Esophagus muscularis mucosa (tissue), 4 donors: ENCODE measurements at regions of chr2 and their contacts with region 1.

Region 1: GRCh38 chr2:239157771-239158170 is 243.0 kb downstream of the HDAC4 start:
- DNase-seq: no peak
- H3K4me3 ChIP-seq: no peak overlapping the region
- H3K27ac ChIP-seq: no peak overlapping the region
- H3K4me1 ChIP-seq: peaks cover 0 to 24% (median 20%) of the 10 kb centered on the region in 4 donors
- H3K27me3 ChIP-seq: no peaks in the 10 kb centered on the region
- CTCF ChIP-seq: no peak
- EP300 ChIP-seq: no peak
- POLR2A ChIP-seq: no peak

Region 2: GRCh38 chr2:239193925-239194677 is 36.3 kb after region 1 on chr2:
- intact Hi-C with region 1: loop called (anchors 5 kb)
- DNase-seq: no peak
- H3K4me3 ChIP-seq: no peak overlapping the region
- H3K27ac ChIP-seq: peak overlapping the region; percentile 30 to 48 (median 31)
- H3K4me1 ChIP-seq: peaks cover 4 to 68% (median 38%) of the 10 kb centered on the region in 4 donors
- H3K27me3 ChIP-seq: no peaks in the 10 kb centered on the region
- CTCF ChIP-seq: peak; percentile 12 to 27 (median 18)
- EP300 ChIP-seq: no peak
- POLR2A ChIP-seq: no peak

Region 3: GRCh38 chr2:239288951-239289511 is 131.3 kb after region 1 on chr2:
- intact Hi-C with region 1: no loop called
- DNase-seq: no peak
- H3K4me3 ChIP-seq: peak overlapping the region in 1 of 4 donors; percentile 1
- H3K27ac ChIP-seq: peak overlapping the region; percentile 55 to 83 (median 80)
- H3K4me1 ChIP-seq: peaks cover 87 to 100% (median 99%) of the 10 kb centered on the region in 4 donors
- H3K27me3 ChIP-seq: no peaks in the 10 kb centered on the region
- CTCF ChIP-seq: no peak
- EP300 ChIP-seq: no peak
- POLR2A ChIP-seq: no peak